Motor neuron (in vitro differentiated cells): ENCODE measurements at regions of chr5 and their contacts with region 1.

Region 1: GRCh38 chr5:30040488-30041118 is 1152.9 kb upstream of the CDH6 start:
- ATAC-seq: peak; percentile 70 to 97 (median 84)
- H3K4me3 ChIP-seq: no peak overlapping the region
- H3K27ac ChIP-seq: no peak overlapping the region
- H3K4me1 ChIP-seq: no peaks in the 10 kb centered on the region

Region 2: GRCh38 chr5:30142432-30142831 is 101.8 kb after region 1 on chr5:
- in situ Hi-C with region 1: no loop called
- ATAC-seq: no peak
- H3K4me3 ChIP-seq: no peak overlapping the region
- H3K27ac ChIP-seq: no peak overlapping the region
- H3K4me1 ChIP-seq: no peaks in the 10 kb centered on the region

Region 3: DNA sequence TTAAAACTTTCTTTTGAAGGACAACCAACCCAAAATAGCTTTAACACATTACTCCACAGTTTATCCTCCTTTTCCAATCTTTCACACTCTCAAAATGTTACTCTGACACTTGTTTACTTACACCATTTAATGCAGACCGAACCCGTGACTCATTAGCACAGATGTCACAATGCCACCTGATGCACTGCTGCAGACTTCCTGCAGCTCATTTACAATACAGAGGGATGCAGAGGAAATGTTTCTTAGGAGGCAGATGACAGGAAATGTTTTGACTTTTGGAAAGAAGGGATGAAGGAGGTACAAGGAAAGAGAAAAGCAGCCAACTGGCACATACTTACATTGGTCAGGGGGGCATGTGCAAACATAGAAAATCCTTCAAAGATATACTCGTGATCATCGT is 1452.3 kb after region 1 on chr5:
- in situ Hi-C with region 1: loop called in 1 of 9 experiments (anchors 25 kb)
- ATAC-seq: peak in 2 of 8 experiments; percentile 67 to 78
- H3K4me3 ChIP-seq: no peak overlapping the region
- H3K27ac ChIP-seq: no peak overlapping the region
- H3K4me1 ChIP-seq: no peaks in the 10 kb centered on the region